Heart right ventricle (tissue), 16 donors: ENCODE measurements at regions of chr5 and their contacts with region 1.

Region 1: GRCh38 chr5:147453875-147454814 is 55.7 kb downstream of the DPYSL3 start:
- DNase-seq: peak; percentile 88 to 90
- ATAC-seq: peak; percentile 89 to 94 (median 91)
- H3K4me3 ChIP-seq: peak overlapping the region; percentile 52 to 86 (median 79)
- H3K27ac ChIP-seq: peak overlapping the region; percentile 78 to 92 (median 86)
- H3K4me1 ChIP-seq: peaks cover 0 to 48% (median 26%) of the 10 kb centered on the region in 9 donors
- H3K27me3 ChIP-seq: peaks cover 0 to 49% (median 6%) of the 10 kb centered on the region in 7 donors
- CTCF ChIP-seq: peak; percentile 90 to 95 (median 92)

Region 2: DNA sequence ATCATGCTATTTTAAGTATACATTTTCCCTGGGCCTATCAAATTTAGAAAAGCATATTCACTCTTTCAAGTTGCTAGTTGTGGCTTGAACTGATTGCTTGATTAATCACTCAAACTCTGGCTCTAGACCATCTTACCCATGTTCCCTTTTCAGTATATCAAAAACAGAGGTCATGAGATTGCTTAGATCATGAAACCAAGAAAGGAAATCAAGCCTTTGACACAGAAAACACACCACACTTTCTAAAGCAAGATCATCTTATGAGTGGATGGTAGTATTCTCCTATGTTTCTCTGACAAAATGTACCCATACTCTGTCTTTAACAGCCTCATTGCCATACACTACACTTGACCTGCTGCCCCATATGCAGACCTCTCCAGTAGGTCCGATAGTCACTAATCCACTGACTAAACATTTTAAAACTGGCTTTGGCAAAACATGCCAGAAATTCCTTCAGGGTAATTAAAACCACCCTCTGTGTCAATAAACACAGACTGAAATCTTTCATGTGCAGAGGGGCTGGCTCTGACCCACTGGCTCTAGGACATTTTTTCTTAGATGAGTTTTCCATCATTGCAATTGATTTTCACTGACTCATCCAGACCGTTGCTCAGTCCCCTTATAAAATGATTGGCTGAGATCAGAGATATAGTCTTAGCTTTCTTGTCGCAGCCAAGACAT is 593.8 kb before region 1 on chr5:
- intact Hi-C with region 1: no loop called
- DNase-seq: no peak
- ATAC-seq: no peak
- H3K4me3 ChIP-seq: no peak overlapping the region
- H3K27ac ChIP-seq: no peak overlapping the region
- H3K4me1 ChIP-seq: no peaks in the 10 kb centered on the region
- H3K27me3 ChIP-seq: no peaks in the 10 kb centered on the region
- CTCF ChIP-seq: no peak

Region 3: GRCh38 chr5:147223948-147224791 is 230.0 kb before region 1 on chr5:
- intact Hi-C with region 1: loop called in 3 of 10 experiments (anchors 10 kb)
- DNase-seq: peak in 1 of 2 donors; percentile 40
- ATAC-seq: peak in 7 of 8 donors; percentile 55 to 81 (median 73)
- H3K4me3 ChIP-seq: no peak overlapping the region
- H3K27ac ChIP-seq: no peak overlapping the region
- H3K4me1 ChIP-seq: no peaks in the 10 kb centered on the region
- H3K27me3 ChIP-seq: peaks cover 0 to 15% (median 4%) of the 10 kb centered on the region in 7 donors
- CTCF ChIP-seq: peak; percentile 39 to 77 (median 64)

Region 4: GRCh38 chr5:147403651-147404640 is 50.2 kb before region 1 on chr5:
- intact Hi-C with region 1: loop called in 1 of 10 experiments (anchors 5 kb)
- DNase-seq: peak; percentile 40 to 65
- ATAC-seq: peak; percentile 81 to 94 (median 92)
- H3K4me3 ChIP-seq: no peak overlapping the region
- H3K27ac ChIP-seq: peak overlapping the region; percentile 34 to 89 (median 82)
- H3K4me1 ChIP-seq: peaks cover 19 to 57% (median 48%) of the 10 kb centered on the region in 9 donors
- H3K27me3 ChIP-seq: no peaks in the 10 kb centered on the region
- CTCF ChIP-seq: no peak

Region 5: DNA sequence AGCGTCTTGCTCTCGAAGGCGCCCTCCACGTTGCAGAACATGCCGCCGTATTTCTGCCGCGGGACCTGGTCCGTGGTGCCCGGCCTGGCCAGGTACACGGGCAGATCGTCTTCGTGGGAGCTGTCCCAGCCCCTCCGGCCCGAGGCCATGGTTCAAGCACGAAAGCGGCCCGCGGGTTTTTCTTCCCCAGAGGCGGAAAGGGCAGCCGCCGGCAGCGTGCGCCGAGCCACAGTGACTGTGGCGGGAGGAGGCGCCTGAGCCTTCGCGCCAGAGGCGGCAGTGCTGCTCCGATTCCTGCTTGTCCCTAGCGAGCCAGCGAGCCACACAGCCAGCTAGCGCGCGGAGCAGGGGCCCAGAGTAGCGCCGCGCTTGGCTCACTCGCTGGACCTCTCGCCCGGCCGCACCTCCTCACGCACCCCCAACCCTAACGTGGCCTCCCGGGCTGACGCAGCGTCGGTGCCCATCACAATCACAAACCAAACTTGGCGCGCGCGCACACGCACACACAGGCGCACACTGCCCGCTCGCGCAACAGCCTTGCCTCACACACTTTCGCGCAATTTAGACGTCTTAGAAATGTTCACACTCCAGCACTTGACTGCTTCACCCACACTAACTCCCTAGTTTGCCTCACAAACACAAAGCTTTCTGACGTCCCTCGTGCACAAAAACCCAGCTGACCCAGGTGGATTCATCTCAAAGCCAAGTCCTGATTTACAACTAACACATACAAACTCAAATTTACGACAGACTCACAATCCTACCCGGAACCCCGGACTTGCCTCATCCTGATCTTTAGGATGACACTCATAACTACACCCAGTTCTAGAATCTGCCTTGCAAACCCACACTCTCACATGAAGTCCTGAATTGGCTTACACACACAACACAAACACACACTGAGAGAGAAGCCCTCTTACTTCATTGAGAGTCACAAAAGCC is 55.8 kb after region 1 on chr5 and contains the start of gene DPYSL3:
- intact Hi-C with region 1: loop called in 3 of 10 experiments (anchors 2 to 5 kb)
- DNase-seq: peak; percentile 70 to 77
- ATAC-seq: peak; percentile 92 to 96 (median 95)
- H3K4me3 ChIP-seq: peak within 1 kb of the TSS; percentile 50 to 86 (median 74)
- H3K27ac ChIP-seq: peak within 1 kb of the TSS; percentile 7 to 96 (median 87)
- H3K4me1 ChIP-seq: peaks cover 0 to 31% (median 5%) of the 10 kb centered on the region in 9 donors
- H3K27me3 ChIP-seq: peaks cover 0 to 34% (median 13%) of the 10 kb centered on the region in 7 donors
- CTCF ChIP-seq: peak in 6 of 9 donors; percentile 7 to 62 (median 48)
- total RNA-seq, gene DPYSL3: 16.6 to 27.4 (median 21.0) TPM

Region 6: GRCh38 chr5:147530530-147531389 is 76.6 kb after region 1 on chr5:
- intact Hi-C with region 1: no loop called
- DNase-seq: no peak
- ATAC-seq: no peak
- H3K4me3 ChIP-seq: no peak overlapping the region
- H3K27ac ChIP-seq: peak overlapping the region in 1 of 10 donors; percentile 6
- H3K4me1 ChIP-seq: peaks cover 0 to 3% (median 0%) of the 10 kb centered on the region in 9 donors
- H3K27me3 ChIP-seq: peaks cover 0 to 5% (median 0%) of the 10 kb centered on the region in 7 donors
- CTCF ChIP-seq: no peak

Region 7: DNA sequence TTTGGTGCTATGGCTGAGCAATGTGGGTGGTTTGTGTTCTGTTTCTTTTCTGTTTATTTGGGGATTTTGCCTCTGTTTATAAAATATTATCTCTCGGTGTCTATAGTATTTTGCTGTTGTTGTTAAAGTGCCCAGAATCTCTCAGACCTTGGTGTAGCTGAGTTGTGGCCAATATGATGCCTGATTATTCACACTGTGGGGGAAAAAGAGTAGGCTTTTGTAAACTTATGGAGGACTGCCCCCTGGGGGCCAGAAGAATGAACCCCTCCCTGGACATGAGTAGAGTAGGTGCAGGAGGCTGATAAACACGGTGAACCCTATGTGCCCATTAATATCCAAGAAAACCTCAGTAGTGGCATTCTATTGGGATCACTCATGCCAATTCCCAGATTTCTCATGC is 104.7 kb after region 1 on chr5:
- intact Hi-C with region 1: loop called in 9 of 10 experiments (anchors 1 to 10 kb)
- DNase-seq: peak; percentile 35 to 58
- ATAC-seq: peak in 7 of 8 donors; percentile 73 to 88 (median 81)
- H3K4me3 ChIP-seq: no peak overlapping the region
- H3K27ac ChIP-seq: peak overlapping the region in 2 of 10 donors; percentile 26 to 38
- H3K4me1 ChIP-seq: peaks cover 0 to 31% (median 14%) of the 10 kb centered on the region in 9 donors
- H3K27me3 ChIP-seq: no peaks in the 10 kb centered on the region
- CTCF ChIP-seq: peak; percentile 37 to 77 (median 66)

Region 8: GRCh38 chr5:147567917-147568598 is 113.9 kb after region 1 on chr5:
- intact Hi-C with region 1: loop called in 1 of 10 experiments (anchors 10 kb)
- DNase-seq: no peak
- ATAC-seq: no peak
- H3K4me3 ChIP-seq: no peak overlapping the region
- H3K27ac ChIP-seq: no peak overlapping the region
- H3K4me1 ChIP-seq: peaks cover 0 to 18% (median 0%) of the 10 kb centered on the region in 9 donors
- H3K27me3 ChIP-seq: no peaks in the 10 kb centered on the region
- CTCF ChIP-seq: no peak

Region 9: GRCh38 chr5:147576646-147577535 is 122.7 kb after region 1 on chr5:
- intact Hi-C with region 1: loop called in 7 of 10 experiments (anchors 2 to 5 kb)
- DNase-seq: peak; percentile 56 to 73
- ATAC-seq: peak in 4 of 8 donors; percentile 51 to 74 (median 64)
- H3K4me3 ChIP-seq: no peak overlapping the region
- H3K27ac ChIP-seq: no peak overlapping the region
- H3K4me1 ChIP-seq: peaks cover 0 to 24% (median 4%) of the 10 kb centered on the region in 9 donors
- H3K27me3 ChIP-seq: no peaks in the 10 kb centered on the region
- CTCF ChIP-seq: peak; percentile 74 to 90 (median 86)